B cell (primary cell): ENCODE measurements at regions of chr12 and their contacts with region 1.

Region 1: GRCh38 chr12:45762185-45763110 is 32.9 kb downstream of the ARID2 start:
- DNase-seq: peak; percentile 30
- ATAC-seq: no peak
- H3K4me3 ChIP-seq: no peak overlapping the region
- H3K4me3 Mint-ChIP-seq: no peak overlapping the region
- H3K27ac ChIP-seq: no peak overlapping the region
- H3K27ac Mint-ChIP-seq: no peak overlapping the region
- H3K4me1 ChIP-seq: no peaks in the 10 kb centered on the region
- H3K4me1 Mint-ChIP-seq: peaks cover 15% of the 10 kb centered on the region
- H3K27me3 ChIP-seq: no peaks in the 10 kb centered on the region
- H3K27me3 Mint-ChIP-seq: no peaks in the 10 kb centered on the region
- CTCF ChIP-seq: peak; percentile 63

Region 2: DNA sequence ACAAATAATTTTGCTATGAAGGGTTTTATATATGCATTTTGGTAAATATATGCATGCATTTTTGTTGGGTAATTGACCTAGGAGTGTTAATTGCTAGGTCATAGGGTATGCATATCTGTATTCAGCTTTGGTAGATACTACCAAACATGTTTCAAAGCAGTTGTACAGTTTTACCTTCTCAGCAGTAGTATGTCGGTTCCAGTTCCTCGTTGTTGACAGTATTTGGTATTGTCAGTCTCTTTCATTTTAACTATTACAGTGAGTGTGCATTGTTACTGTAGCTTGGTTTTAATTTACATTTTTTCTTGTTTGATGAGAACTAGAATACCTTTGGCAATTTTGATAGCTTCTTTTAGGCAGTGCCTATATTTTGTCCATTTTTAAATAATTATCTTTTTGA is 66.0 kb after region 1 on chr12:
- CTCF ChIA-PET with region 1: interaction called, 3 read pairs
- POLR2A ChIA-PET with region 1: no interaction called
- intact Hi-C with region 1: loop called (anchors 5 kb)
- DNase-seq: peak; percentile 7
- ATAC-seq: no peak
- H3K4me3 ChIP-seq: no peak overlapping the region
- H3K4me3 Mint-ChIP-seq: no peak overlapping the region
- H3K27ac ChIP-seq: no peak overlapping the region
- H3K27ac Mint-ChIP-seq: no peak overlapping the region
- H3K4me1 ChIP-seq: no peaks in the 10 kb centered on the region
- H3K4me1 Mint-ChIP-seq: peaks cover 6% of the 10 kb centered on the region
- H3K27me3 ChIP-seq: no peaks in the 10 kb centered on the region
- H3K27me3 Mint-ChIP-seq: no peaks in the 10 kb centered on the region
- CTCF ChIP-seq: no peak